ENCODE measurements at regions of chr3 and their contacts with region 1.

Region 1: GRCh38 chr3:4350789-4351163 is 47.6 kb downstream of the SETMAR start:
- DNase-seq: no peak
- ATAC-seq: peak; percentile 87 to 91

Region 2: GRCh38 chr3:4493014-4493940 is 142.5 kb after region 1 on chr3 and contains the start of gene ITPR1:
- intact Hi-C with region 1: loop called in 1 of 2 experiments (anchors 10 kb)
- DNase-seq: peak; percentile 99
- ATAC-seq: peak; percentile 97 to 98
- total RNA-seq, gene ITPR1: 36.8 to 43.8 TPM

Region 3: DNA sequence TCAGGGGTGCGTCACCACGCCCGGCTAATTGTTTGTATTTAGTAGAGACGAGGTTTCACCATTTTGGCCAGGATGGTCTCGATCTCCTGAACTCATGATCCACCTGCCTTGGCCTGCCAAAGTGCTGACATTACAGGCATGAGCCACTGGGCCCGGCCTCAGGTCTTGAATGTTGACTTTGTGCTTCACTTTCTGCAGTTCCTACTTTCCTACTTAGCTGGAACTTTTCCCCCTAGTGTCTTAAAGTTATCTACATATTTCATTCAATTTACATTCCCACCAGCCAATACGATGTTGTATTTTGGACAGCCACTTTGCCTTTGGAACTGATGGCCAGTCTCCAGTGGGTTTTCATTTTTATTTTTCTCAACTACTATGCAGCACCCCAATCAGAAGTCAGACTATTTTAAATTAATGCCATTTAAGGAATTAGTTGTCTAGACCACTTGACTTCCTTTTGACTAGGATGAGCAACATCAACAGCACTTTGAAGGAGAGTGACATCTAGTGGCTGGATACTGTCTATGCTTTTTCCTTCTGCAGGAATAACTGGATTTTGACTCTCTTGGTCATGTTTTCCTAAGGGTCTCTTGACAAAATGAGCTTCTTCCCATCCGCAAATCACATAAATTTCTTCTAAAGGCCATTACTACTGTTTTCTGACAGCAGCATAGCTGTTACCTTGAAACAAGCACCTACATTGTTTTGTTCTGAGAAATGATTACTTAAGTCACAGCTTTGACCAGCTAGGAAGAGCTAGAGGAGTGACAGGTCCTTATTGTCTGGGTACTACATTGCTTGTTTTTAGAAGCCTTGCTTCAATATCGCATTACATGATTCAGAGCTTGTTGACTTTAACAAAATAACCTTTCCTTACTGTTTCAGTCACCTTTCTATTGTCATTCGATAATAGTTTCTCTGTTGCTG is 282.6 kb after region 1 on chr3:
- intact Hi-C with region 1: loop called (anchors 1 to 5 kb)
- DNase-seq: no peak
- ATAC-seq: peak; percentile 75 to 76